CD4-positive, alpha-beta memory T cell (primary cell): ENCODE measurements at regions of chr12 and their contacts with region 1.

Region 1: GRCh38 chr12:91811481-91812287 is 334.0 kb downstream of the BTG1 start:
- DNase-seq: peak; percentile 64 to 73 (median 67)
- H3K4me3 ChIP-seq: no peak overlapping the region
- H3K4me3 Mint-ChIP-seq: peak overlapping the region in 5 of 8 donors; percentile 2 to 57 (median 44)
- H3K27ac ChIP-seq: no peak overlapping the region
- H3K27ac Mint-ChIP-seq: peak overlapping the region; percentile 7 to 92 (median 84)
- H3K4me1 ChIP-seq: peaks cover 8% of the 10 kb centered on the region
- H3K4me1 Mint-ChIP-seq: peaks cover 4 to 13% (median 12%) of the 10 kb centered on the region in 4 donors
- H3K27me3 ChIP-seq: no peaks in the 10 kb centered on the region
- H3K27me3 Mint-ChIP-seq: no peaks in the 10 kb centered on the region

Region 2: DNA sequence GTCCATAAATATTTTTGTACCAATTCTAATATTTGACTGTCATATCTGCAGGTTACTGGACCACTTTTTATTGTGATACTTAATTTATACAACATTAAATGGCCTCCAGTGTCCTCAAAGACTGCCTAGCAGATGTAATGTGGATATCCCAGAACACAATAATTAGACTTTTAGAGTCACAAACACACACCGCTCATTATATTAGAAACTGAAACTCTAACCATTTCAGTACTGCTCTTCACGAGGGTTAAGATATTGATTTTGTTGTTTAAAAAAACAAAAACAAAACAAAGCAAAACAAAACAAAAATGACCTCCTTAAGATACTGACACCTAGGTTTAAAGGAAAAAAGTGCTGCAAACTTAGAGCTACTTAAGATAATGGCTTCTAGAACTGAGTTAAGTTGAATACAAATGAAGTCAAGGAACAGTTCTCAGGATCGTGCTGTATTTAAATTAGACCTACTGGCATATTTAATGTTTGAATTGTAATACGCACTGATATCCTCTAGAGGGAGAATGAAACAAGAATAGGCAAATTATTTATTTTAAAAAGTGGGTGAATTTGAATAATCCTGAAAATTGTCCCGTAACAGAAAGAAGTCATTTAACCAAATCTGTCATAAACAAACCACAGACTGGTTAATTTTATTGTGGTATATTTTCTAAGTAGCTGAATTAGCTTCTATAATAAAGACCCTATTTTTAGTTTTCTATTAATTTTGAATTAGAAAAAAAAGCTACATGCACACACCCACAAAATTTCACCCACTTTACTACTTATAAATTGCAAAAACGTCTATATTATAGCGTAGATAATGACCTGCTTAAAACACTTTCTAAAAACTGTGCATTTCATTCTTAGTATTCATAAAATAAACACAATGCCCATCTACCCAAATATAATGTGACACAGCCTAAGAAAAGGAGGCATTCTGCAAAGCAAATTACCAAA is 233.8 kb before region 1 on chr12:
- CTCF ChIA-PET with region 1: interaction called, 11 read pairs
- POLR2A ChIA-PET with region 1: no interaction called
- intact Hi-C with region 1: no loop called
- DNase-seq: peak in 4 of 5 donors; percentile 33 to 44 (median 42)
- H3K4me3 ChIP-seq: peak overlapping the region; percentile 18 to 50
- H3K4me3 Mint-ChIP-seq: peak overlapping the region; percentile 77 to 91 (median 84)
- H3K27ac ChIP-seq: no peak overlapping the region
- H3K27ac Mint-ChIP-seq: peak overlapping the region in 5 of 7 donors; percentile 33 to 91 (median 77)
- H3K4me1 ChIP-seq: peaks cover 4% of the 10 kb centered on the region
- H3K4me1 Mint-ChIP-seq: peaks cover 4 to 9% (median 5%) of the 10 kb centered on the region in 4 donors
- H3K27me3 ChIP-seq: no peaks in the 10 kb centered on the region
- H3K27me3 Mint-ChIP-seq: peaks cover 1 to 3% of the 10 kb centered on the region in 2 donors

Region 3: DNA sequence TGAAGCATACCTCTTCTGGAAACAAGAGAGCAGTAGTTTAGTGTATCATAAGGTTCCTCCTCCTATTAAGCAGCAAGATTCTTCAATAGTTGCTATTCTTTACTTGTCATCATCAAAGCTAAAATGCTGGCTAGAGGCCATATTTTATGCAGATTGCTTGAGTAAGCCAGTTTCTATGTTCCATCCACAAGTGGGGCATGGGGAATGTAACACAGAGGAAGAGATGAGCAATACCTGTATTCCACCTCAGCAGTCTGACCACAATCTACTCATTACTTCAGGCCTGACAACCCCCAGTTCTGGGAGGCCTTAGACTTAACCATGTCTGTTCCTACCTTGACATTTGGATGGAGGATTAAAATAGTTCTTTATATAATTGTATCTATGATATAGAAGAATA is 89.6 kb before region 1 on chr12:
- CTCF ChIA-PET with region 1: no interaction called
- POLR2A ChIA-PET with region 1: no interaction called
- intact Hi-C with region 1: no loop called
- DNase-seq: no peak
- H3K4me3 ChIP-seq: no peak overlapping the region
- H3K4me3 Mint-ChIP-seq: no peak overlapping the region
- H3K27ac ChIP-seq: no peak overlapping the region
- H3K27ac Mint-ChIP-seq: no peak overlapping the region
- H3K4me1 ChIP-seq: no peaks in the 10 kb centered on the region
- H3K4me1 Mint-ChIP-seq: no peaks in the 10 kb centered on the region
- H3K27me3 ChIP-seq: no peaks in the 10 kb centered on the region
- H3K27me3 Mint-ChIP-seq: no peaks in the 10 kb centered on the region

Region 4: DNA sequence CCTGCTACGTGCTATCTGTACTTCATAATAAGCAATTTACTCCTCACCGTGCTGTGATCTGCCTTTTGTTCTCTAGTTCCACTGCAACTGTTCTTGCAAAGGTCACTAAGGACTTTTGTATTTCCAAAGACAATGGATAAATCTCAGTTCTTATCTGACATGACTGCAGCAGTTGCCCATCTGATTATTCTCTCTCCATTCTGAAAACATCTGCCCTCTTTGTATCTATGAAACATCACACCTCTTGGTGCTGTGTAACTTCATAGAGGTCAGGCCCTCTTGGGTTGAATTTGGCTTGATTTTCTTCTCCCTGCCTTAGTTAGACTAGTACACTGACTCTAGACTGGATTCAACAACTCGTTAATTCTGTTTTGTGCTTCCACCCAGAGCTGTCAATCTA is 14.3 kb after region 1 on chr12:
- CTCF ChIA-PET with region 1: interaction called, 36 read pairs
- POLR2A ChIA-PET with region 1: interaction called, 6 read pairs
- intact Hi-C with region 1: no loop called
- DNase-seq: no peak
- H3K4me3 ChIP-seq: no peak overlapping the region
- H3K4me3 Mint-ChIP-seq: no peak overlapping the region
- H3K27ac ChIP-seq: no peak overlapping the region
- H3K27ac Mint-ChIP-seq: no peak overlapping the region
- H3K4me1 ChIP-seq: no peaks in the 10 kb centered on the region
- H3K4me1 Mint-ChIP-seq: no peaks in the 10 kb centered on the region
- H3K27me3 ChIP-seq: no peaks in the 10 kb centered on the region
- H3K27me3 Mint-ChIP-seq: no peaks in the 10 kb centered on the region

Region 5: DNA sequence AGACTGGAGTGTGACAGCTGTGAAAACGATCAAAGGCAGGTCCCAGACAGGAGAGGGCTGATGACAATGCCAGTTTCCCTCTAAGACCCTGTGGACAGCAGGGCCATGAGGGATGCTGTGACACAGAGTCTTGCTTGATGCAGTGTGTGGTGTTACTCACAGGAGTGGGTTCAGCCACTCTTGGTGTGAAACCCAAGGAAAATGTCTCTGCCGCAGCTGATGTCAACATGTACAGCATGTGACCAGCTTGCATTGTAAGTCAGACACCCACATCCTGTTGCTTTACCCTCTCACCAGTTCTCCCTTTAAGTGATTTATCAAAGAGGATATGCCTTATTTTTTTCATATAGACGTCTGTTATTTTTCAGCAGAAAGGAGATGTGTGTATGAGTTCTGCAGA is 65.3 kb after region 1 on chr12:
- CTCF ChIA-PET with region 1: interaction called, 45 read pairs
- POLR2A ChIA-PET with region 1: interaction called, 44 read pairs
- intact Hi-C with region 1: loop called (anchors 1 kb)
- DNase-seq: peak; percentile 87 to 98 (median 93)
- H3K4me3 ChIP-seq: peak overlapping the region; percentile 9 to 14
- H3K4me3 Mint-ChIP-seq: peak overlapping the region; percentile 73 to 86 (median 79)
- H3K27ac ChIP-seq: peak overlapping the region; percentile 93
- H3K27ac Mint-ChIP-seq: peak overlapping the region; percentile 99 to 100 (median 100)
- H3K4me1 ChIP-seq: peaks cover 76% of the 10 kb centered on the region
- H3K4me1 Mint-ChIP-seq: peaks cover 54 to 79% (median 64%) of the 10 kb centered on the region in 4 donors
- H3K27me3 ChIP-seq: no peaks in the 10 kb centered on the region
- H3K27me3 Mint-ChIP-seq: no peaks in the 10 kb centered on the region

Region 6: DNA sequence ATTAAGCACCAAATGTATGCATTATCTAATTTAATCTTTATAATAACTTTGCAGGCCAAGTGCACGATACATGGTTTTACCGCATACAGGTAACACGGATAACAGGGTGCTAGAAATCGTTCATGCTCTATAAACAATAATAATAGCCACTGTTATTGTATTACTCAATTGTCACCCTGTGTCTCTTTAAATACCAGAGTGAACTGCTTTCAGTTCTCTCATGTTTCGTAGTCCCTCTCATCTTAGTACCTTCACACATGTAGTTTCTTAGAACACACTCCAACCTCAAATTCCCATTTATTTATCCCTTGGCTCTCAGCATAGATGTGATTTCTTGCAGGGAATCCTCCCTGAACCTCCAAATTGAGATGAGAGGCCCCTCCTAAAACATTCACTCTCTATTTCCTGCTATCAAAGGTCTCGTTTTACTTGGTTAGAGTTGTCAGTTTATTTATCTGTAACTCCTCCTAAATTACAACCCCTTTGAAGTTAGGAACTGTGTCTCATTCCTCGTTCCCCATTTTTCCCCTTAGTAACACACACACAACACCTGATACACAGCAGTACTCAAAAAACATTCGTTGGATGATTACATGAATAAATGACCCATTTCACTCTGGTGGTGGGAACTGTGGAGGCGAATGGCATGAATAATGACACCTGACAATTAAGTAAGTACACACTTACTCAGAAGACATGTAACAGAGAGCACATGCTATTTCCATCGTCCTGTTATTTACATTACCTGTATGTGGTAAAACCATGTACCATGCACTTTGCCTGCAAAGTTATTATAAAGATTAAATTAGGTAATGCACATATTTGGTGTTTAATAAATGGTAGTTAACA is 199.4 kb after region 1 on chr12:
- CTCF ChIA-PET with region 1: interaction called, 11 read pairs
- POLR2A ChIA-PET with region 1: no interaction called
- intact Hi-C with region 1: no loop called
- DNase-seq: no peak
- H3K4me3 ChIP-seq: no peak overlapping the region
- H3K4me3 Mint-ChIP-seq: peak overlapping the region; percentile 36 to 90 (median 80)
- H3K27ac ChIP-seq: peak overlapping the region; percentile 32
- H3K27ac Mint-ChIP-seq: peak overlapping the region; percentile 22 to 93 (median 85)
- H3K4me1 ChIP-seq: peaks cover 23% of the 10 kb centered on the region
- H3K4me1 Mint-ChIP-seq: peaks cover 31 to 51% (median 37%) of the 10 kb centered on the region in 4 donors
- H3K27me3 ChIP-seq: no peaks in the 10 kb centered on the region
- H3K27me3 Mint-ChIP-seq: no peaks in the 10 kb centered on the region

Region 7: DNA sequence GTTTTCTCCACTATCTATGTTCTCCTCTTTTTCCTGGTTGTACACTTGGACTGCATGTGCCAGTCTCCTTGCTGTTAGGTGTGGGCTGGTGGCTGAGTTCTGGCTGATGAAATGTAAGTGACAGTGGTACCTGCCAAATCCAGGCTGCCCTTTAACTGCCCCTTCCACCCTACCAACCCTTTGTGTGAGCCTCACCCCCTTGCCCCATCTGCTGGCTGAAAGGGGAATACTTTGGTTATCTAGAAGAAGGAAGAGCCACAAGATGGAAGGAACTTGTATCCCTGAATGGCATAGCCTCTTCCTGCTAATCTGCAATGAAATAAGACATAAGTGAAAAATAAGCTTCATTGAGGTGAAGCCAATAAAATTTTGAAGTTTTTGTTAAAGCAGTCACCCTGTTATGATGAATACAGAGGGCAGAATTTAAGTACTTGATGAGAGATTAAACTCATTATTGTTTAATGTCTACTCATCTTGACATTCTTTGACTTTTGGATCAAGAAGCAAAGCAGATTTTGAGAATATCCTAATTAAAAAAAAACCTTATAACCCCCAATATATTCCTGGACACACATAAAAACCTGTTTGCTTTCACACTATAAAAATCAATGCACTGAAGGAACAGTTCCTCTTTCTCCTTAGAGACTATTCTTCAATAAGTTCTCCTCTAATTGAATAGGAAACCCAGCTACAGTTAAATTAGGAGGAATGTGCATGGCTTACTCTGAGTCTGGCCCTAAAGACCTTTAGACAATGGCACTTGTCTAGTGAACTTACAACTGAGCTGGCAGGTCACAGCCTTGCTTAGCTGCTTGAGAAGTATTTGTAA is 596.6 kb after region 1 on chr12:
- CTCF ChIA-PET with region 1: interaction called, 8 read pairs
- POLR2A ChIA-PET with region 1: interaction called, 3 read pairs
- intact Hi-C with region 1: loop called (anchors 5 kb)
- DNase-seq: peak in 3 of 5 donors; percentile 38 to 45 (median 45)
- H3K4me3 ChIP-seq: no peak overlapping the region
- H3K4me3 Mint-ChIP-seq: peak overlapping the region in 5 of 8 donors; percentile 2 to 80 (median 30)
- H3K27ac ChIP-seq: no peak overlapping the region
- H3K27ac Mint-ChIP-seq: peak overlapping the region in 6 of 7 donors; percentile 30 to 91 (median 77)
- H3K4me1 ChIP-seq: peaks cover 40% of the 10 kb centered on the region
- H3K4me1 Mint-ChIP-seq: peaks cover 38 to 73% (median 49%) of the 10 kb centered on the region in 4 donors
- H3K27me3 ChIP-seq: no peaks in the 10 kb centered on the region
- H3K27me3 Mint-ChIP-seq: no peaks in the 10 kb centered on the region